ENCODE measurements at regions of chr4 and their contacts with region 1.

Region 1: GRCh38 chr4:71713611-71714203 is 70.2 kb downstream of the GC start:
- DNase-seq: no peak
- H3K4me3 ChIP-seq: no peak overlapping the region
- H3K27ac ChIP-seq: no peak overlapping the region
- H3K4me1 ChIP-seq: peaks cover 4% of the 10 kb centered on the region
- H3K27me3 ChIP-seq: no peaks in the 10 kb centered on the region
- CTCF ChIP-seq: peak; percentile 53

Region 2: GRCh38 chr4:70651864-70652506 is 1061.7 kb before region 1 on chr4:
- intact Hi-C with region 1: loop called (anchors 5 kb)
- DNase-seq: no peak
- H3K4me3 ChIP-seq: no peak overlapping the region
- H3K27ac ChIP-seq: no peak overlapping the region
- H3K4me1 ChIP-seq: no peaks in the 10 kb centered on the region
- H3K27me3 ChIP-seq: no peaks in the 10 kb centered on the region
- CTCF ChIP-seq: peak; percentile 49

Region 3: DNA sequence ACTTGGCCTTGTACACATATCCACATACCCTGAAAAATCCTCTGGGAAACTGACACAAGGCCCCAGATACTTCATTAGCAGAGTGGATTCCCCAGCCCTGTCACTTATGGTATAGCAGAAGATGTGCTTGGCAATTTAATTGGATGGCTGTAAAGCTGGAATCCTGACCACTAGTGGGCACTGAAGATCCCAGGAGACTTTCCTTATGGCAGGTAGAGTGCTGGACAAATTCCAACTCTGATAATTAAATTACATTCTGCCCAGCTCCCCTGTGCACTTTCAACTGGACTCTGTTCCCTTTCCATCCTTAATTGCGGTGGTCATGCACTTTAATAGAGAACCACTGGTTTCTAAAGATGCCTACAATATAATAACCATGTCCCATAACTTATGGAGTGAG is 600.4 kb before region 1 on chr4:
- intact Hi-C with region 1: loop called (anchors 5 kb)
- DNase-seq: peak; percentile 41
- H3K4me3 ChIP-seq: no peak overlapping the region
- H3K27ac ChIP-seq: no peak overlapping the region
- H3K4me1 ChIP-seq: no peaks in the 10 kb centered on the region
- H3K27me3 ChIP-seq: no peaks in the 10 kb centered on the region
- CTCF ChIP-seq: peak; percentile 31

Region 4: DNA sequence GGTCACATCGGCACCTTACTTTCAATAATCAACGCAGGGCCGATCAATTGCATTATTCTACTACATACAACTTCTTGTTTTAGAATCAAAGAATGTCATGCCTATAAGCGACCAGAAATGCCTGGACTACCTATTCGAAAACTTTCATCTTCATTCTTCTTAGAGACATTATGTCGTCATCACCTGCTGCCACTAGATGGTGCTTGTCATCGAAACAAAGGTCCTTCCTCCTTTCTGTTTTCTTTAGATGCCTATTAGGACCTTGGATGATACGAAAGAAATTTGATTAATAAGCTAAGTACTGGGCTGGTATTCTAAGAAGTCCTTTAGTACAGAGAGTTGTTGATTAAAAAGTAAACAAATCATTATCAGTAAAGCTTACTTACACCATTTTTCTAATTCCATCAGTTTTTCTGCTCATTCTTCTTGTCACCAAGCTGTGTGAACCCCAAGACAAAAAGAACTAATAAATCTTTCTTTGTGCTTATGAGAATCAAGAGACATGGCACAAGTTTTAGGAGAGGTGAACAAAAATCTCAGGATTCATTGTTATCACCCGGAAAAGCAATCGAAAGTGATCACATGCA is 529.4 kb before region 1 on chr4:
- intact Hi-C with region 1: loop called (anchors 5 kb)
- DNase-seq: peak; percentile 73
- H3K4me3 ChIP-seq: no peak overlapping the region
- H3K27ac ChIP-seq: no peak overlapping the region
- H3K4me1 ChIP-seq: no peaks in the 10 kb centered on the region
- H3K27me3 ChIP-seq: no peaks in the 10 kb centered on the region
- CTCF ChIP-seq: peak; percentile 58

Region 5: DNA sequence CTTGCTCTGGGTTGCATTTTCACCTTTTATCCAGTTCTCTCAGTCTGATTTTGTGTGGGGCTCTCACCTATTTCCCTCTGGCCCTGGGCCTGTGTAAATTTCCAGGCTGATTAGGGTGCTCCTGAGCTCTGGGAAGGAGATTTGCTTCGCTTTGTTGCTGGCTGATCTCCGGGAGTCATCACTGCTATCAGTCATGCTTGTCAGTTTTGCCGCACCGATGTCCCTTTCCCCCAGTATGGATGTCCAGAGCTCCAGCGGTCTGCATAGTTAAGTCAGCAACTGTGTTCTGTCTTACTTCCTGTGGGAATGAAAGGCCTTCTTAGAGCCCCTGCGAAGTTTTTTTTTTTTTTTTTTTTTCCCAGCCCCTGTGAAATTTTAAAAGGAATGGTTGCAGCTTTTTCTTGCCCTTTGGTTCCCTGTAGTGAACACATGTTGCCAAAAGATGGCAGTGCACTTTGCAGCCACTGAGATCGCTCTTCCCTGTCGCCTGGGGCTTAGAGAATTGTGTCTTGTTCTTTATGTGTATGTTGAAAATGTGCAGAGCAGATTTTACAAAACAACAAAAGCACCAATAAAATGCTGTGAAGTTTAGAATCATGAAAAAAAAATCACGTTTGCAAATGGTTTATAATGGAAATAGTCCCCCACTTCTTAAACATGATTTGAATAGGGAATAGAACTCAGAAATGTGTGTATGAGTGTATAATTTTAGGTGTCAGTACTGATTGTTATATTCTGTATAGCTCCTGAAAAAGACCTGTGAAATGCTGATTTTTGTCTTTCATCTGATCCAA is 484.0 kb before region 1 on chr4:
- intact Hi-C with region 1: loop called (anchors 10 kb)
- DNase-seq: peak; percentile 41
- H3K4me3 ChIP-seq: no peak overlapping the region
- H3K27ac ChIP-seq: no peak overlapping the region
- H3K4me1 ChIP-seq: peaks cover 7% of the 10 kb centered on the region
- H3K27me3 ChIP-seq: no peaks in the 10 kb centered on the region
- CTCF ChIP-seq: peak; percentile 59

Region 6: GRCh38 chr4:71559957-71560571 is 153.6 kb before region 1 on chr4:
- intact Hi-C with region 1: loop called (anchors 10 kb)
- DNase-seq: no peak
- H3K4me3 ChIP-seq: no peak overlapping the region
- H3K27ac ChIP-seq: no peak overlapping the region
- H3K4me1 ChIP-seq: no peaks in the 10 kb centered on the region
- H3K27me3 ChIP-seq: no peaks in the 10 kb centered on the region
- CTCF ChIP-seq: no peak

Measured in colonic mucosa (tissue), 4 donors.